ENCODE measurements at regions of chr17 and their contacts with region 1.

Region 1: GRCh38 chr17:31900877-31901276 is 631 bp downstream of the UTP6 start:
- DNase-seq: no peak
- CTCF ChIP-seq: no peak

Region 2: GRCh38 chr17:31882571-31882970 is 18.3 kb before region 1 on chr17:
- CTCF ChIA-PET with region 1: interaction called, 13 read pairs
- POLR2A ChIA-PET with region 1: no interaction called
- DNase-seq: peak; percentile 34
- CTCF ChIP-seq: no peak

Region 3: GRCh38 chr17:31888124-31888523 is 12.8 kb before region 1 on chr17:
- CTCF ChIA-PET with region 1: interaction called, 15 read pairs
- POLR2A ChIA-PET with region 1: interaction called, 5 read pairs
- DNase-seq: peak; percentile 23
- CTCF ChIP-seq: no peak